GM12878 (cell line): ENCODE measurements at regions of chrX and their contacts with region 1.

Region 1: GRCh38 chrX:13653022-13653693 is at the start of gene TCEANC:
- DNase-seq: peak; percentile 89
- ATAC-seq: peak; percentile 98
- H3K4me3 ChIP-seq: peak within 1 kb of the TSS; percentile 76
- H3K27ac ChIP-seq: peak within 1 kb of the TSS; percentile 71
- H3K4me1 ChIP-seq: peaks cover 7% of the 10 kb centered on the region
- H3K27me3 ChIP-seq: no peaks in the 10 kb centered on the region
- CTCF ChIP-seq: no peak
- EP300 ChIP-seq: no peak
- POLR2A ChIP-seq: peak; percentile 85
- RAD21 ChIP-seq: no peak
- polyA plus RNA-seq, gene TCEANC: 1.5 to 4.0 TPM

Region 2: GRCh38 chrX:12974796-12975669 is 678.1 kb before region 1 on chrX and contains the start of gene TMSB4X:
- CTCF ChIA-PET with region 1: no interaction called
- POLR2A ChIA-PET with region 1: no interaction called
- RAD21 ChIA-PET with region 1: no interaction called
- SMC1A ChIA-PET with region 1: no interaction called
- in situ Hi-C with region 1: loop called (anchors 25 kb)
- intact Hi-C with region 1: no loop called
- DNase-seq: no peak
- ATAC-seq: peak; percentile 35
- H3K4me3 ChIP-seq: peak within 1 kb of the TSS; percentile 81
- H3K27ac ChIP-seq: peak within 1 kb of the TSS; percentile 90
- H3K4me1 ChIP-seq: peaks cover 6% of the 10 kb centered on the region; the same call in 1 of the 2 replicates
- H3K27me3 ChIP-seq: no peaks in the 10 kb centered on the region
- CTCF ChIP-seq: no peak
- EP300 ChIP-seq: no peak
- POLR2A ChIP-seq: peak; percentile 97
- RAD21 ChIP-seq: no peak
- polyA plus RNA-seq, gene TMSB4X: 32,576 to 35,408 TPM

Region 3: DNA sequence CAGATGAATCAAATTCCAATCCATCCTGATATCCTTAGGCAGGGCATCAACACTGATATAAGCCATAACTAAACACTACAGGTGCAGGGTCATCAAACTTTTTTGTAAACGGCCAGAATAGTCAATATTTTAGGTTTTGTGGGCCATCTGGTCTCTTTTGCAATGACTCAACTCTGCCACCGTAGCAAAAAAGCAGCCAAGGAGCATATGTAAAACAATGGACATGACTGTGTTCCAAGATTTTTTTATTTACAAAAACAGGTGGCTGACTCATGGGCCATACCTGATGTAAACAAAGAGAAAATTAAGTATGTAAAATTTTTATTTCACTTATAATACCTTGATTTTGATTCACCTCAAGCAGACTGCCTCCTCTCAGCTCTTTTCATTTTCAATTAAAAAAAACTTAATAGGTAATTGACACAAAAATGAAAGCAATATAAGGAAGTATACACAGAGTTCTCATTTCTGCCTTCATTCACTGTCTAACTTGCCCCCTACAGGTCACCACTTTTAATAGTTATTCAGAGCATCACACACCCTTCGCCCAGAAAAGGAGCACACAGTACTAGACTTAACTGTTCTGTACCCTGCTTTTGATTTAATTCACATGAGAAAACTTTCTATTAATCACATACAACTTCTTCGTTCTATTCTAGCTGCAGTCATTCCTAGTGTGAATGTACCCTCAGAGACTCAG is 199.0 kb after region 1 on chrX:
- CTCF ChIA-PET with region 1: no interaction called
- POLR2A ChIA-PET with region 1: interaction called, 3 read pairs
- RAD21 ChIA-PET with region 1: no interaction called
- SMC1A ChIA-PET with region 1: no interaction called
- in situ Hi-C with region 1: no loop called
- intact Hi-C with region 1: loop called (anchors 5 kb)
- DNase-seq: no peak
- ATAC-seq: peak; percentile 90
- H3K4me3 ChIP-seq: no peak overlapping the region
- H3K27ac ChIP-seq: no peak overlapping the region
- H3K4me1 ChIP-seq: peaks cover 5% of the 10 kb centered on the region; the same call in 1 of the 2 replicates
- H3K27me3 ChIP-seq: no peaks in the 10 kb centered on the region
- CTCF ChIP-seq: peak; percentile 39 to 47 (median 44)
- EP300 ChIP-seq: no peak
- POLR2A ChIP-seq: no peak
- RAD21 ChIP-seq: peak; percentile 27